Ovary (tissue), 10 donors: ENCODE measurements at regions of chr21 and their contacts with region 1.

Region 1: GRCh38 chr21:33360881-33361602 is 36.3 kb downstream of the IFNAR1 start:
- DNase-seq: peak; percentile 66 to 83 (median 76)
- H3K4me3 ChIP-seq: no peak overlapping the region
- H3K27ac ChIP-seq: peak overlapping the region; percentile 4 to 43
- H3K4me1 ChIP-seq: peaks cover 4% of the 10 kb centered on the region
- H3K27me3 ChIP-seq: no peaks in the 10 kb centered on the region
- CTCF ChIP-seq: peak; percentile 53 to 62 (median 60)
- EP300 ChIP-seq: no peak
- POLR2A ChIP-seq: no peak

Region 2: GRCh38 chr21:33025489-33026442 is 335.3 kb before region 1 on chr21 and contains the start of gene OLIG2:
- intact Hi-C with region 1: no loop called
- DNase-seq: no peak
- H3K4me3 ChIP-seq: no peak within 1 kb of the TSS
- H3K27ac ChIP-seq: no peak within 1 kb of the TSS
- H3K4me1 ChIP-seq: peaks cover 2% of the 10 kb centered on the region
- H3K27me3 ChIP-seq: peaks cover 4% of the 10 kb centered on the region
- CTCF ChIP-seq: no peak
- EP300 ChIP-seq: no peak
- POLR2A ChIP-seq: no peak
- total RNA-seq, gene OLIG2: not detected

Region 3: GRCh38 chr21:33383056-33383888 is 22.2 kb after region 1 on chr21:
- intact Hi-C with region 1: no loop called
- DNase-seq: peak; percentile 65 to 78 (median 72)
- H3K4me3 ChIP-seq: no peak overlapping the region
- H3K27ac ChIP-seq: peak overlapping the region in 1 of 2 donors; percentile 17
- H3K4me1 ChIP-seq: peaks cover 11% of the 10 kb centered on the region
- H3K27me3 ChIP-seq: no peaks in the 10 kb centered on the region
- CTCF ChIP-seq: no peak
- EP300 ChIP-seq: no peak
- POLR2A ChIP-seq: no peak

Region 4: DNA sequence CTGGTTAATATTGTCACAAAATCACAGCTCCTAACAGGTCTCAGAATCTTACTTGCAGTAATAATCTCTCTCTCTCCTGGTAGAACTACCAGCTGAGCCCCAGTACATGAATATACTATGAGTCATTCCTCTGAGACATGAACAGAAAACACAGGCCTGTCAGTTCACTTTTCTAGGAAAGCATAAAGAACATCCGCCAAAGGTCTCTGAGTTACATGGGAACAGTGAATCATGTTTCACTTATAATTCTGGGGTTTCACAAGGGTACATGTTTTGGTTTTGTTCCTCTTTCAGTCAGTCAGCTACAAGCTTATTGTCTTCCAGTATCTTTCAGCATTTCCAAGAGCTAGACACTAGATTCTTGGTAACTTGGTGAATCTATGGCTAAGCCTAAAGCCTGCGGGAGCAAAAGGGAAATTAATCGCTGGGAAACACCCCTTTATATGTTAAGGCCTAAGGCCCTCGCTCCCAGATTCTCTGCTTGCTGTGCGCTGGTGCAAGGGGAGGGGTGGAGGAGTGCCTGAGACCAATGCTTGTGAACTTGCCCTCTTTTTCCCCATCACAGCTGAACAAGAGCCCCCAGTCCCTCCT is 73.8 kb after region 1 on chr21:
- intact Hi-C with region 1: loop called in 1 of 4 experiments (anchors 10 kb)
- DNase-seq: no peak
- H3K4me3 ChIP-seq: no peak overlapping the region
- H3K27ac ChIP-seq: peak overlapping the region in 1 of 2 donors; percentile 22
- H3K4me1 ChIP-seq: no peaks in the 10 kb centered on the region
- H3K27me3 ChIP-seq: no peaks in the 10 kb centered on the region
- CTCF ChIP-seq: no peak
- EP300 ChIP-seq: no peak
- POLR2A ChIP-seq: no peak

Region 5: GRCh38 chr21:33491373-33492102 is 130.5 kb after region 1 on chr21 and contains the start of gene DNAJC28:
- intact Hi-C with region 1: no loop called
- DNase-seq: peak; percentile 90 to 94 (median 92)
- H3K4me3 ChIP-seq: peak within 1 kb of the TSS; percentile 48
- H3K27ac ChIP-seq: peak within 1 kb of the TSS in 1 of 2 donors; percentile 55
- H3K4me1 ChIP-seq: no peaks in the 10 kb centered on the region
- H3K27me3 ChIP-seq: no peaks in the 10 kb centered on the region
- CTCF ChIP-seq: no peak
- EP300 ChIP-seq: no peak
- POLR2A ChIP-seq: peak; percentile 45
- total RNA-seq, gene DNAJC28: 0.34 to 1.7 (median 1.2) TPM